ENCODE measurements at regions of chr14 and their contacts with region 1.

Region 1: DNA sequence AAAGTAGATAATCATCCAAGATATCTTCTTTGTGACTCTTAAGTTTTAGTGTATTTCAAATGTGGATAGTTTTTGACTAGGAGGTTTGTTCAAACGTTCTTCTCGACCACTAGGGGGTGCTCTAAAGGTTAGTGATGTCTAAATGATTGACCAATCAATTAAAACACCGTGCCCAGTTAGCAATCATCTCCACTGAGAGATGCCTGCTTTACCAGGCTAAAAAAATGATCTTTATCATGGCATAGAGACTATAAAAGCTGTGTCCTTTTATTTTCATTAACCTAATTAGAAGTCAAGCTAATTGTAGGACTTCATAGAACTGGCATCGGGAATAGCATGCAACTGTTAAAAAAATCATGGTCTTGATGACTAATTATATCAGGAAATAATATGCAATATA is 153.9 kb downstream of the PRKCH start:
- DNase-seq: peak; percentile 84
- ATAC-seq: no peak
- H3K4me3 ChIP-seq: no peak overlapping the region
- H3K27ac ChIP-seq: no peak overlapping the region; the same call in 1 of the 2 replicates
- H3K4me1 ChIP-seq: peaks cover 45% of the 10 kb centered on the region
- H3K27me3 ChIP-seq: no peaks in the 10 kb centered on the region
- CTCF ChIP-seq: peak; percentile 67
- POLR2A ChIP-seq: no peak
- RAD21 ChIP-seq: peak; percentile 64

Region 2: DNA sequence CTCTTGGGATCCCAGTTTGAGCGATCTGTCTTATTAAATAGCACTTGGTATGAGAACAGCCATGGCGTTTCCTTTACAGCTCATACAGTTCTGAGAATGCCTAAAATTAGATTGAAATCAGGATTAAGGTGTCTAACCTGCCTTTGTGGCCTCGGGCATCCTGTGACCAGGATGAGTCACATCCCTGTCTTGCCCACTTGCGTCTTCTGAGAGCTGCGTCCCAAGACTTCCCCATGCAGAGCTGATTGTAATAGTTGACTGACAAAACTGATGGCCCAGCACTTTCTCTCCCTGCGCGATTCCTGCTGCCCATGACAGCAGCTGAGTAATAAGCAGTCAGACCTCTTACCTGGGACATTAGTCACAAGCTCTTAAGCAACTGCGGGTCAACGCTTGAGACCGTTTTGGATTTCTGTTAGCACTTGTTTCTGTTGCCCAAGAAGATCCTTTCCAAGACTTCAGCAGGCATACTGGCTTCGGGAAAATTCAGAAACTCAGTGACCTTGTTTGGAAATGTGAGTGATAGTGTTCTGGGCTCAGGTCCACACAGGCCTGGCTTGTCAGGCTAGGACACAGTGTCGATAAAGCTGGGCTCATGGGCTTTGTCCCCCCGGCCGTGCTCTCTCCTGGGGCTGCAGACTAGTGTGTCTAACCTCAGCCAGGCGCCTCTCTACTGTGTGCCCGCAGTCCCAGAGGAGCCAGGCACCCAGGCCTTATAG is 50.1 kb after region 1 on chr14:
- CTCF ChIA-PET with region 1: interaction called, 6 read pairs
- POLR2A ChIA-PET with region 1: no interaction called
- dilution Hi-C with region 1: no loop called
- in situ Hi-C with region 1: no loop called
- intact Hi-C with region 1: loop called (anchors 5 kb)
- DNase-seq: peak; percentile 52
- ATAC-seq: no peak
- H3K4me3 ChIP-seq: no peak overlapping the region
- H3K27ac ChIP-seq: no peak overlapping the region; the same call in 1 of the 2 replicates
- H3K4me1 ChIP-seq: peaks cover 33% of the 10 kb centered on the region
- H3K27me3 ChIP-seq: no peaks in the 10 kb centered on the region
- CTCF ChIP-seq: no peak
- POLR2A ChIP-seq: no peak
- RAD21 ChIP-seq: no peak

Region 3: GRCh38 chr14:61609191-61609843 is 134.0 kb after region 1 on chr14:
- CTCF ChIA-PET with region 1: interaction called, 6 read pairs
- POLR2A ChIA-PET with region 1: no interaction called
- dilution Hi-C with region 1: no loop called
- in situ Hi-C with region 1: no loop called
- intact Hi-C with region 1: loop called (anchors 2 kb)
- DNase-seq: peak; percentile 66
- ATAC-seq: peak; percentile 73
- H3K4me3 ChIP-seq: no peak overlapping the region
- H3K27ac ChIP-seq: peak overlapping the region; percentile 85
- H3K4me1 ChIP-seq: peaks cover 28% of the 10 kb centered on the region
- H3K27me3 ChIP-seq: no peaks in the 10 kb centered on the region
- CTCF ChIP-seq: no peak
- POLR2A ChIP-seq: no peak
- RAD21 ChIP-seq: peak; percentile 12; the same call in 1 of the 2 replicates

Region 4: GRCh38 chr14:61653507-61653906 is 178.2 kb after region 1 on chr14:
- CTCF ChIA-PET with region 1: no interaction called
- POLR2A ChIA-PET with region 1: no interaction called
- dilution Hi-C with region 1: no loop called
- in situ Hi-C with region 1: no loop called
- intact Hi-C with region 1: loop called (anchors 5 kb)
- DNase-seq: peak; percentile 88
- ATAC-seq: peak; percentile 87
- H3K4me3 ChIP-seq: no peak overlapping the region
- H3K27ac ChIP-seq: 0 out of 2 replicates have a peak overlapping the region, but pooled peaks have one; percentile 17
- H3K4me1 ChIP-seq: peaks cover 4% of the 10 kb centered on the region
- H3K27me3 ChIP-seq: no peaks in the 10 kb centered on the region
- CTCF ChIP-seq: no peak
- POLR2A ChIP-seq: no peak
- RAD21 ChIP-seq: no peak

Region 5: GRCh38 chr14:61694830-61695694 is 219.7 kb after region 1 on chr14 and contains the start of gene HIF1A:
- CTCF ChIA-PET with region 1: interaction called, 6 read pairs
- POLR2A ChIA-PET with region 1: no interaction called
- dilution Hi-C with region 1: loop called (anchors 25 kb)
- in situ Hi-C with region 1: no loop called
- intact Hi-C with region 1: loop called (anchors 1 kb)
- DNase-seq: peak; percentile 99
- ATAC-seq: peak; percentile 94
- H3K4me3 ChIP-seq: peak within 1 kb of the TSS; percentile 94
- H3K27ac ChIP-seq: peak within 1 kb of the TSS; percentile 90
- H3K4me1 ChIP-seq: no peaks in the 10 kb centered on the region; the same call in none of the 2 replicates
- H3K27me3 ChIP-seq: no peaks in the 10 kb centered on the region
- CTCF ChIP-seq: peak; percentile 30; the same call in 1 of the 2 replicates
- POLR2A ChIP-seq: peak; percentile 97
- RAD21 ChIP-seq: peak; percentile 48
- total RNA-seq, gene HIF1A: 301 and 493 TPM in 2 replicates

Measured in IMR-90 (cell line).